GM10248 (cell line): ENCODE measurements at regions of chr7 and their contacts with region 1.

Region 1: DNA sequence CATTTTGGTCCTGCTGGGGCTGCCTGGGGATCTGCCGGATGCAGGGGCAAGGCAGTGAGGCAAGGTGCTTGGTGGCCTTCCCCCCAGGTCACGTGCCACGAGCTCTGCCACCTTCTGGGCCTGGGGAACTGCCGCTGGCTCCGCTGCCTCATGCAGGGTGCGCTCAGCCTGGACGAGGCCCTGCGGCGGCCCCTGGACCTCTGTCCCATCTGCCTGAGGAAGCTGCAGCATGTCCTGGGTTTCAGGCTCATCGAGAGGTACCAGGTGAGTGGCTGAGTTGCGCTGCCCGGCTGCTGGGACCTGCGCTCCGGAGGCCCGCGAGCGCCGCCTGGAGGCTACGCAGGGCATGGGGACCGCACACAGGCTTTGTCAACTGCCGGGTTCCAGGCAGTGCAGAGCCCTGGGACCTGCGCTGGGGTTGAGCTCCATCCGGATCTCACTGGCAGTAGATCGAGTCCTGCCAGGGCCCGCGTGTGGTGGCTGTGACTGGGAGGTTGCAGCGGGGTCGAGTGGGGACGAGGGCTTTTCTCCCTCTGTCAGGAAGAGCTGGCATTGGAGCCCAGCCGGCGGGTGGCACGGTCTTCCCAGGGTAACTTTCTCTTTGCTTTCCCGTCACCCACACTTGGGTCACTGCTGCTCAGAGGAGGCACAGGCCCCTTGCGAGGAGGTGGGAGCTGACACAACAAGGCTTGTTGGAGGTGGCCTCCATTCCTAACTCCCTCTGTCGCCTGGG is 21.7 kb downstream of the AMZ1 start:
- DNase-seq: peak; percentile 90
- CTCF ChIP-seq: peak; percentile 98

Region 2: GRCh38 chr7:2336626-2337299 is 373.0 kb before region 1 on chr7:
- CTCF ChIA-PET with region 1: no interaction called
- POLR2A ChIA-PET with region 1: no interaction called
- DNase-seq: no peak
- CTCF ChIP-seq: no peak

Region 3: DNA sequence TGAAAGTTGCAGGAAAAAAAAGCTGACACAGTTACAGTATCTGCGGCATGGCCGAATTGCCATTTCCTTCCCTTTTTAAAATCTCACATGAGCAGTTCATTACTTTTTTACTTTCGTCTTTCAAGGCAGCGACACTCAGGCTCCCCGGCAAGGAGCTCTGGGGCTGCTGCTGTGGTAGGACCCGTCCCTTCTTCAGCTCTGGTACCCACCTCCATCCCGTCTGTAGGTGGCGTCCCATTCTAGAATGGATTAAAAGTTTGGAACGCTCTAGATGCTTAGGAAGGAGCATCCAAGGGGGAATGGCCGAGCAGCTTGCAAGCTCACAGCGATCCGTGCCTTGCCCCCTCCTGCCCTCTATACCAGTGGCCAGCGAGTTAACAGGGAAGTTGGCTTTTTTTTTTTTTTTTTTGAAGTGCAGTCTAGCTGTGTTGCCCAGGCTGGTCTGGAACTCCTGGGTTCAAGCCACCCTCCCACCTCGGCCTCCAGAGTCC is 100.8 kb before region 1 on chr7:
- CTCF ChIA-PET with region 1: interaction called, 13 read pairs
- POLR2A ChIA-PET with region 1: no interaction called
- DNase-seq: peak; percentile 74
- CTCF ChIP-seq: peak; percentile 52

Region 4: DNA sequence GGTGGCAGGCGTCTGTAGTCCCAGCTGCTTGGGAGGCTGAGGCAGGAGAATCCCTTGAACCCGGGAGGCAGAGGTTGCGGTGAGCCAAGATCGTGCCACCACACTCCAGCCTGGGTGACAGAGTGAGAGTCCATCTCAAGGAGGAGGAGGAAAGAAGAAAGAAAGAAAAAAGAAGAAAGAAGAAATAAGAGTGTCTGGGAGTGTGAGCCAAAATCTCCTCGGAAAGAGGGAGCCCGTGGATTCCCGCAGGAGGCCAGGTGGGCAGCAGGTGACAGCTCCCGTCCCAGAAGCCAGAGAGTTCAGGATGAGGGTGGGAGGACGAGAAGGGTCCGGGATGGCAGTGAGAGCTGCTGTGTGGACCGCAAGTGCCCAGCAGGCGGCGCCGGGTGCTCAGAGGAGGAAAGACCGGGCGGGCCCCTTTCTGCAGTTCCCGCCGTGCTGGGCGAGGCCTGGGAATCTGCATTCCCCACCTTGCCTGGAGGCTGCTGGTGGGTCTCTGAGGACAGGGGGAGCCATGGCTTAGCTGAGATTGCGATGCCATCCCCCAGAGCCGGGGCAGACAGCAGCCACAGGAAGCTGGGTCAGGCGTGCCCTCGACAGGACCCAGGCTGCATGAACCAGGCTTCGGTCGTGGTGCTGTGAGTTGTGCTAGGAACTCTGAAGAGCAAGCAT is 38.9 kb before region 1 on chr7:
- CTCF ChIA-PET with region 1: interaction called, 65 read pairs
- POLR2A ChIA-PET with region 1: no interaction called
- DNase-seq: peak; percentile 87
- CTCF ChIP-seq: peak; percentile 95

Region 5: GRCh38 chr7:2688409-2689331 is 21.0 kb before region 1 on chr7:
- CTCF ChIA-PET with region 1: interaction called, 35 read pairs
- POLR2A ChIA-PET with region 1: no interaction called
- DNase-seq: peak; percentile 78
- CTCF ChIP-seq: no peak

Region 6: DNA sequence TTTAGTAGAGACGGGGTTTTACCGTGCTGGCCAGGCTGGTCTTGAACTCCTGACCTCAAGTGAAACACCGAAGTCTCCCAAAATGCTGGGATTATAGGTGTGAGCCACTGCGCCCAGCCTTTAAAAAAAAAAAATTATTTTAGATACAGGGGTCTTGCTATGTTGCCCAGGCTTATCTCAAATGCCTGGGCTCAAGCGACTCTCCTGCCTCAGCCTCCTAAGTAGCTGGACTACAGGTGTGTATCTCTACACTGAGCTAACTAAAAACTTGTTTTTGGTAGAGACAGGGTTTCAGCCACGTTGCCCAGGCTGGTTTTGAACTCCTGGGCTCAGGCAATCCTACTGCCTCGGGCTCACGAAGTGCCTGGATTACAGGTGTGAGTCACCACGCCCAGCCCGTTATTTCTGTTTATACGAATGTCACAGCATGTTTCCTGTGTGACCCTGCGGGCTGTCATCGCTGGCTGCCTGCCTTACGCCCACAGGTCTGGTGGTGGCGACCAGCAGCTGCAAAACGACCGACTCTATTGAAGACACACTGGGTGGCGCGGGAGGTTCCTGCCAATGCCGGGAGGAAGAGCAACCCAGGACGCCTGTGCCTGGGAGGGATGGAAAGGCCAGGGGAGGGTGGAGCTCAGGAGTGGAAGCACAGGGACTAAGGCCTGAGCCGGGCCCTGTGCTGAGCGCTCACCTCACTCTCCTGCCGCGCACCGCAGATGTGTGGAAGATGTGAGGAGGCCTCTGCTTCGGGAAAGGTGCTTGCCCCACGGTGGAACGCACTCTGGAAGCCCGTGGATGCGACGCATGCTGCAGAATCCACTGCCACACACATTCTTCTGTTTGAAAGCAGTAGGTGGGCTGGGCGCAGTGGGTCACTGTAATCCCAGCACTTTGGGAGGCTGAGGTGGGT is 11.1 kb after region 1 on chr7:
- CTCF ChIA-PET with region 1: interaction called, 55 read pairs
- POLR2A ChIA-PET with region 1: no interaction called
- DNase-seq: peak; percentile 91
- CTCF ChIP-seq: peak; percentile 39

Region 7: DNA sequence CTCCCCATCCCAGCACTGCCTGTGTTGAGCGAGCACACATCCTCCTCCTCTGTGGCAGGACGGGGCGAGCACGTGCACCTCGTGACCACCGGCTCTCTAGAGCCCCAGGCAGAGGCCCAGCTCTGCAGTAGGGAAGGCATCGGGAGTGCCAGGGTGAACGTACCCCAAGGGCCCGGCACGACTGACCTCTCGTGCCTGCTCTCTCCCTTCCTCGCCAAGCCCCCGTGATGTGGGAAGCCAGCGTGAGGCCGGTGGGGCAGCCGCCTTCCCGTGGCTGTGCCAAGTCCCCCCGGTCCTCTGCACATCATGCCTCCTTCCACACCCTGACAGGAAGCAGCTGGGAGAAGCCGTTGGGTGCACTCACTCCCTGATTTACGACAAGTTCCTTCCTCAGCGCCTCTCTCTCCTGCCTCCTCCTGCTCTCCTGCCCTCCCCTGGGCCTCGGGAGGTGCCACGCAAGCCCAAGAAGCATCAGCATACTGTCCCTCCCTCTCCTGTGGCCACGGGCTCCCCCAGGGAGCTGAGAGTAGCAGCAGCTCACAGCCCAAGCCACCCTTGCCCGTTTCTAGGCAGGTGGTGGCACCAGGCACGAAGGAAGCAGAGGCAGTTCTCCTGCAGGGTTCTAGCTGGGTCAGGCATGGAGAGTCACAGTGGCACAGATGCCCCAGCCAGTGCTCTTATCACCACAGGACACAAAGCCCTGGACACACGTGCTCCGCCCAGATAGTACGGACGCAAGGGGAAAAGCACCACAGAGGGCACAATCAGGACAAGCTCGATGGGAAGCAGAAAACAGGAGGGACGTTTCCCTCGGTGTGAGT is 25.2 kb after region 1 on chr7:
- CTCF ChIA-PET with region 1: interaction called, 10 read pairs
- POLR2A ChIA-PET with region 1: no interaction called
- DNase-seq: no peak
- CTCF ChIP-seq: no peak

Region 8: GRCh38 chr7:3094701-3095445 is 385.2 kb after region 1 on chr7:
- CTCF ChIA-PET with region 1: no interaction called
- POLR2A ChIA-PET with region 1: no interaction called
- DNase-seq: peak; percentile 61
- CTCF ChIP-seq: no peak

Region 9: DNA sequence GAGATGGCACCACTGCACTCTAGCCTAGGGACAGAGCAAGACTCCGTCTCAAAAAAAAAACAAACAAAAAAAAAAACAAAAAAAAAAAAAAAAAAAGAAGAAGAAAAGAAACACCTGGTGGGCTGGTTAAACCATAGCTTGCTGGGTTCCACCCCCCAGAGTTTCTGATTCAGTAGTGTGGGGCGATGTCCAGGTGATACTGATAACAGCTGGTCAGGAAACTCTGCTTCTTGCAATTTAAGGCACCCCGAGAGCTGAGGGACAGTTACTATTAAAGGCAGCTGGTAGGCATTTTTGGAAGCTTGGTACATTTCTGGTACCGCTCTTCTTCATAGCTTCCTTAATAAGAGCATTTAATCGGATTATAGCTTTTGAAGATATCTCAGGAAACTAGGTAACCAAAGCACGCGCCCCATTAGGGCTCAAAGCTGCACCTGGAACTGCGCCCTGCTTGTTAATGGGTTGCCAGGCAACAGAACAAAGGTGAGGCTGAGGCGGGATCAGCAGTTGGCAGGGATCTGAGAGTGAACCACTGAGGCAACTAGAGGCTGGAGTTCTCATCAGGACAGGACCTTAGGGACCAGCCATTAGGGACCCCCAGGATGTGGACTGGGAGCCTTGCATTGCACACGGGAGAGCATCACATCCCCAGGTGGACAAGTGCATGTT is 584.8 kb after region 1 on chr7:
- CTCF ChIA-PET with region 1: no interaction called
- POLR2A ChIA-PET with region 1: no interaction called
- DNase-seq: no peak
- CTCF ChIP-seq: no peak